Gastrocnemius medialis (tissue), 4 donors: ENCODE measurements at regions of chr12 and their contacts with region 1.

Region 1: DNA sequence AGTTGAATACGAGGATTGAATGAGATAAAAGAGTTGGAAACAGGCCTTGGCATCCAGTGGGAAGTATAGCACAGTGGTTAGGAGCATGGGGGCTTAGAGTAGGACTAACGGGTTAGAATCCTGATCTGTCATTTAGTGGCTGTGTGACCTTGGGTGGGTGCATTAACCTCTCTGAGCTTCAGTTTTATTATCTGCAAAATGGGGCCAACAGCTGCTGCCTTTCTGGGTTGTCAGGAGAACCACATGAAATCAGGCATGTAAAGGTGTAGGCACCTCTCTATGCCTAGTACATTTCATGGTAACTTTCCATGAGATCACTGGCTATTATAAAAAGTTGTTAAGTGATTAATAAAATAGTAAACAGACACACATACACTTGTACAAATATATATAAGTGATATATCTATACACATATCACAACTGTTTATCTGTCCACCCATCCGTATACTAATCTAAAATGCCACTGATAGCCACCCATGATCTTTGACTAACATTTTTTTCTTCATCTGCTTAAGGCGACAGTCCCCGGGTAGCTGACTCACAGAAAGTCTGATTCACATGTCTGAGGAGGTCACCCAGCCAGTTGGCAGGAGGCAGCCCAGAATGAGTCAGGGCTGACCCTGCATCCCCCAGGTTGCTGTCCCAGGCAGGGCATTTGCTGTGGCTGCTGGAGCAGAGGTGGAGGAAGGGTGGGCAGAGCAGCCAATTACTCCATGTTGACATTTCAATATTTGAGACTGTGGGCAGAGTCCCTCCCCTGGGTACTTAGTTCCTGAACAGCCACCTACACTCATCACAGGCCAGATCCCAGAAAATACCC is 125.6 kb upstream of the NOS1 start:
- DNase-seq: peak; percentile 84 to 93
- ATAC-seq: peak; percentile 82 to 89
- H3K4me3 ChIP-seq: no peak overlapping the region
- H3K27ac ChIP-seq: peak overlapping the region; percentile 69 to 88 (median 86)
- H3K4me1 ChIP-seq: peaks cover 15 to 38% of the 10 kb centered on the region in 2 donors
- H3K27me3 ChIP-seq: no peaks in the 10 kb centered on the region
- CTCF ChIP-seq: no peak
- POLR2A ChIP-seq: peak in 1 of 2 donors; percentile 18

Region 2: GRCh38 chr12:117412465-117413188 is 74.4 kb before region 1 on chr12:
- in situ Hi-C with region 1: no loop called
- intact Hi-C with region 1: loop called (anchors 2 kb)
- DNase-seq: peak; percentile 85 to 98
- ATAC-seq: peak; percentile 83 to 85
- H3K4me3 ChIP-seq: peak overlapping the region in 1 of 4 donors; percentile 23
- H3K27ac ChIP-seq: peak overlapping the region; percentile 79 to 89 (median 84)
- H3K4me1 ChIP-seq: peaks cover 48 to 57% of the 10 kb centered on the region in 2 donors
- H3K27me3 ChIP-seq: no peaks in the 10 kb centered on the region
- CTCF ChIP-seq: peak in 1 of 5 experiments; percentile 22
- POLR2A ChIP-seq: no peak

Region 3: DNA sequence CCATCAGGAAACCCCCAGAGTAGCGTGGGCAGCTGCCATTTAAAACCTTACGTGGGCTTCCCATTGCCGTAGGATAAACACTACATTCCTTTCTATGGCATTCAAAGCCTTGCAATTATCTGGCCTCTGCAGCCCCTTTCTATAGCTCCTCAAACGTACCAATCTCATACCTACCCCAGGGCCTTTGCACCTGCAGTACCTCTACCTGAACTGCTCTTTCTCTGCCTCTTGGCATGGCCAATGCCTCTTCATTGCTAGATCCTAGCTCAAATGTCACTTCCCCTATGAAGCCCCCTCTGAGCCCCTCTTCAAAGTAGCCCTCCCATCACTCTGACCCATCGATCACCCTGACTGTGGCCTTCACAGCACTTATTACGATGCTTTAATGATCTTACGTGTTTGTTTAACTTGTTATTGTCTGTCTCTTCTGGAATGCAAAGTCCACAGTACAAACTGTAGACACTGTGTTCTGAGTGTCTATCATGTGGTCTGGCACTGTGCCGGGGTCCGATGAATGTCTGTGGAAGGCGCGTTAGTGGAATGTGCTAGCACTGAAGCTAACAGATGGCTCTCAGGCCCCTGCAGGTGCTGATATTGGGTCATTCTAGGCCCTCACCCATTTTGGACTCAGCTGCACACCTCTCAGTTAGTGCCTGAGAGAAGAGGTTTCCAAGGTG is 31.7 kb after region 1 on chr12:
- in situ Hi-C with region 1: no loop called
- intact Hi-C with region 1: loop called (anchors 1 kb)
- DNase-seq: peak; percentile 75 to 82
- ATAC-seq: peak; percentile 28 to 64
- H3K4me3 ChIP-seq: no peak overlapping the region
- H3K27ac ChIP-seq: peak overlapping the region in 3 of 4 donors; percentile 10 to 74 (median 31)
- H3K4me1 ChIP-seq: peaks cover 18 to 52% of the 10 kb centered on the region in 2 donors
- H3K27me3 ChIP-seq: no peaks in the 10 kb centered on the region
- CTCF ChIP-seq: no peak
- POLR2A ChIP-seq: no peak

Region 4: DNA sequence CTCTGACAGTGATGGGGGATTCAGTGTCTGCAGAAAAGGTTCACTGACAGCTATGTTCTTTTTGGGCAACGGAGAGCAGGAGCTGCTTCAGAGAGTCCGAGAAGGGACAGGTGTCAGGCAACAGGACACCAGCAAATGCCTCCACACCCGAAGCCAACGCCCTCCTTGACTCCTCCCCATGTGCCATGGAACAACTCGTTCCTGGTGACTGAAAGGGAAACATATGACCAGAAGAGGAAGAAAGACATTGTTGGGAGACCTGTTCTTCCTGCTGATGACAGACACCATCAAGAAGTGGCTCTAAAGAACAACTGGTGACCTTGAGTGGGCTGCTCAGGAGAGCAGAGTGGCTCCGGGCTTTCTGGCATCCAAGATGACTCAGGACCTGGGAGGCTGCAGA is 46.7 kb after region 1 on chr12:
- in situ Hi-C with region 1: no loop called
- intact Hi-C with region 1: loop called (anchors 1 kb)
- DNase-seq: peak; percentile 94 to 97
- ATAC-seq: peak; percentile 92 to 96
- H3K4me3 ChIP-seq: no peak overlapping the region
- H3K27ac ChIP-seq: peak overlapping the region; percentile 89 to 93 (median 92)
- H3K4me1 ChIP-seq: peaks cover 22 to 26% of the 10 kb centered on the region in 2 donors
- H3K27me3 ChIP-seq: no peaks in the 10 kb centered on the region
- CTCF ChIP-seq: no peak
- POLR2A ChIP-seq: peak; percentile 32 to 42

Region 5: GRCh38 chr12:117587631-117588287 is 100.7 kb after region 1 on chr12:
- in situ Hi-C with region 1: no loop called
- intact Hi-C with region 1: no loop called
- DNase-seq: peak; percentile 27 to 65
- ATAC-seq: peak; percentile 83 to 91
- H3K4me3 ChIP-seq: peak overlapping the region in 3 of 4 donors; percentile 27 to 33 (median 30)
- H3K27ac ChIP-seq: no peak overlapping the region
- H3K4me1 ChIP-seq: no peaks in the 10 kb centered on the region
- H3K27me3 ChIP-seq: peaks cover 0 to 5% (median 0%) of the 10 kb centered on the region in 3 donors
- CTCF ChIP-seq: peak; percentile 87 to 92 (median 90)
- POLR2A ChIP-seq: no peak